ENCODE measurements at regions of chr12 and their contacts with region 1.

Region 1: GRCh38 chr12:9647825-9648700 is 21.4 kb upstream of the CLEC2D start:
- DNase-seq: peak; percentile 90
- CTCF ChIP-seq: no peak

Region 2: DNA sequence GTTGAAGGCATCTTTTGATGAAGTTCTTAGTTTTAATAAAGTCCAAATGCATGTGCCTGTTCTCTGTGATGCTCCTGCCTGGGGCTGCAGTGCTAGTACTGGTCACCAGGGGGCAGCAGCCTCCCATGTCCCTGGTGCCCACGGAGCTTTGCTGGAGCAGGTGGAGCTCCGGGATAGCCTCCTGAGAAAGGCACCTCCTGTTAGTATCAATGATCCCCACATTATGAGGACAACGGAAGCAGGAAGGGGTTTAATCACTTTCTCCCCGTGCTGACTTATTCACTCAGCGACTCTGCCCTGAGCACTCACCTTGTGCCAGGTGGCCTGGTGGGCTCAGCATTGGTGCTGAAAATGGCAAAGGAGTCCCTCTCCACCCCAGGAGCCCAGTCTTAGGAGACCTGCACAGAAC is 316.8 kb before region 1 on chr12:
- in situ Hi-C with region 1: loop called (anchors 25 kb)
- DNase-seq: peak; percentile 72
- CTCF ChIP-seq: peak; percentile 97

Measured in GM13976 (cell line).